Activated naive CD4-positive, alpha-beta T cell treated with anti-CD3 and anti-CD28 coated beads for 36 hours (primary cell): ENCODE measurements at regions of chr2 and their contacts with region 1.

Region 1: GRCh38 chr2:148874868-148875341 is at the start of gene KIF5C:
- DNase-seq: peak; percentile 94
- H3K4me3 Mint-ChIP-seq: peak within 1 kb of the TSS; percentile 88
- H3K27ac Mint-ChIP-seq: peak within 1 kb of the TSS; percentile 53
- H3K4me1 Mint-ChIP-seq: peaks cover 13% of the 10 kb centered on the region
- H3K27me3 Mint-ChIP-seq: peaks cover 19% of the 10 kb centered on the region
- total RNA-seq, gene KIF5C: 18.6 to 24.5 TPM

Region 2: DNA sequence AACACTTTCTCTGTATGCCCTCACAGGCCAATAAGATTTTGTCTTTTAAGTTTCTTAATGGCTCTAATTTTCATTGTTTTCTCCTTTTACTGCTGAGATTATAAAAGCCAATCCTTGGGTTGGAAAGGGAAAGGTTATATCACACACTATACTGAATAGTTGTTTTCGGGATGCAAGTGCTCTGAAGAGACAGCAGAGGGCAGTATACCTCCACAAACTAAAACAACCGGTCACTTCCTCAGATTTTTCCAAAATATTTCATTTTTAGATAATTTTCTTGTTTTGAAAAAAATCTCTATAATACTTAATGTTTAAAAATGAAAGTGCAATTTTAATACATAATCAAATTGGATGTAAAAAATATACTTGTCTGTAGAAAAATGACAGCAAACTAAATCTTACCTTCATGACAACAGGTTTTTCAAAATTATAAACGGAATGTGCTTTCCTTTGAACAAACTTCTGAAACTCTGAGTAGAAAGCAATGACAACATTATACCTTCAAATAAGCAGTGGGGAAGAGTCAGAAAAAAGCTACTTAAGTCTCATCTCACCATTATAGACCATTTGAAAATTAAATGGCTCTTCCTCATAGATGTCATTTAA is 937.1 kb before region 1 on chr2:
- CTCF ChIA-PET with region 1: no interaction called
- intact Hi-C with region 1: loop called (anchors 5 kb)
- DNase-seq: no peak
- H3K4me3 Mint-ChIP-seq: no peak overlapping the region
- H3K27ac Mint-ChIP-seq: no peak overlapping the region
- H3K4me1 Mint-ChIP-seq: no peaks in the 10 kb centered on the region
- H3K27me3 Mint-ChIP-seq: no peaks in the 10 kb centered on the region

Region 3: GRCh38 chr2:148603562-148603920 is 271.4 kb before region 1 on chr2:
- CTCF ChIA-PET with region 1: no interaction called
- intact Hi-C with region 1: loop called (anchors 1 kb)
- DNase-seq: peak; percentile 56
- H3K4me3 Mint-ChIP-seq: no peak overlapping the region
- H3K27ac Mint-ChIP-seq: peak overlapping the region; percentile 82
- H3K4me1 Mint-ChIP-seq: peaks cover 16% of the 10 kb centered on the region
- H3K27me3 Mint-ChIP-seq: no peaks in the 10 kb centered on the region

Region 4: DNA sequence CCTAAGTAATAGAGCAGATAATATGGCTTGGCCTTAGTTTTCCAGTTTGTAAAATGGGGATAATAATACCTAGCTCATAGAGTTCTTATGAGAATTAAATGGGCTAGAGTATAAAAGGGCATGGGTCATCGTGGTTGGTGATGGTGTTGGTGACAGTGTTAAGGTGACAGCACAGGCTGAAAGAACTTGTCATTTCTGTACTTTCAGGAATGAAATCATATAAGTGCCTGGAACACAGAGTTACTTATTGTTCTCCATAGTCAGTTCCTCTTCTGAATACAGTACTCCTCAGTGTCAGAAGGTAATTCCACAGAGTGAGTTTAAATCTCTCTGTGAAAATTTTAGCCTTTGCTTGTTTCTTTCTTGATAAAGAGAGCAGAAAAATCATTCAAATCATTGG is 42.5 kb after region 1 on chr2:
- CTCF ChIA-PET with region 1: no interaction called
- intact Hi-C with region 1: loop called (anchors 2 kb)
- DNase-seq: peak; percentile 46
- H3K4me3 Mint-ChIP-seq: no peak overlapping the region
- H3K27ac Mint-ChIP-seq: no peak overlapping the region
- H3K4me1 Mint-ChIP-seq: peaks cover 9% of the 10 kb centered on the region
- H3K27me3 Mint-ChIP-seq: no peaks in the 10 kb centered on the region

Region 5: GRCh38 chr2:149104221-149104620 is 229.3 kb after region 1 on chr2:
- CTCF ChIA-PET with region 1: no interaction called
- intact Hi-C with region 1: no loop called
- DNase-seq: no peak
- H3K4me3 Mint-ChIP-seq: no peak overlapping the region
- H3K27ac Mint-ChIP-seq: no peak overlapping the region
- H3K4me1 Mint-ChIP-seq: no peaks in the 10 kb centered on the region
- H3K27me3 Mint-ChIP-seq: peaks cover 8% of the 10 kb centered on the region

Region 6: GRCh38 chr2:149587220-149587949 is 712.5 kb after region 1 on chr2 and contains the start of gene MMADHC:
- CTCF ChIA-PET with region 1: no interaction called
- intact Hi-C with region 1: loop called (anchors 1 kb)
- DNase-seq: peak; percentile 96
- H3K4me3 Mint-ChIP-seq: peak within 1 kb of the TSS; percentile 96
- H3K27ac Mint-ChIP-seq: peak within 1 kb of the TSS; percentile 98
- H3K4me1 Mint-ChIP-seq: peaks cover 30% of the 10 kb centered on the region
- H3K27me3 Mint-ChIP-seq: peaks cover 11% of the 10 kb centered on the region
- total RNA-seq, gene MMADHC: 142 to 143 TPM